Heart right ventricle (tissue), 16 donors: ENCODE measurements at regions of chr22 and their contacts with region 1.

Region 1: GRCh38 chr22:37807410-37808293 is at the start of gene GCAT:
- DNase-seq: peak; percentile 94 to 96
- ATAC-seq: peak; percentile 88 to 94 (median 91)
- H3K4me3 ChIP-seq: peak within 1 kb of the TSS; percentile 54 to 85 (median 71)
- H3K27ac ChIP-seq: peak within 1 kb of the TSS in 9 of 10 donors; percentile 30 to 96 (median 62)
- H3K4me1 ChIP-seq: peaks cover 6 to 58% (median 36%) of the 10 kb centered on the region in 9 donors
- H3K27me3 ChIP-seq: peaks cover 0 to 27% (median 0%) of the 10 kb centered on the region in 7 donors
- CTCF ChIP-seq: no peak
- total RNA-seq, gene GCAT: 26.7 to 47.8 (median 41.5) TPM

Region 2: DNA sequence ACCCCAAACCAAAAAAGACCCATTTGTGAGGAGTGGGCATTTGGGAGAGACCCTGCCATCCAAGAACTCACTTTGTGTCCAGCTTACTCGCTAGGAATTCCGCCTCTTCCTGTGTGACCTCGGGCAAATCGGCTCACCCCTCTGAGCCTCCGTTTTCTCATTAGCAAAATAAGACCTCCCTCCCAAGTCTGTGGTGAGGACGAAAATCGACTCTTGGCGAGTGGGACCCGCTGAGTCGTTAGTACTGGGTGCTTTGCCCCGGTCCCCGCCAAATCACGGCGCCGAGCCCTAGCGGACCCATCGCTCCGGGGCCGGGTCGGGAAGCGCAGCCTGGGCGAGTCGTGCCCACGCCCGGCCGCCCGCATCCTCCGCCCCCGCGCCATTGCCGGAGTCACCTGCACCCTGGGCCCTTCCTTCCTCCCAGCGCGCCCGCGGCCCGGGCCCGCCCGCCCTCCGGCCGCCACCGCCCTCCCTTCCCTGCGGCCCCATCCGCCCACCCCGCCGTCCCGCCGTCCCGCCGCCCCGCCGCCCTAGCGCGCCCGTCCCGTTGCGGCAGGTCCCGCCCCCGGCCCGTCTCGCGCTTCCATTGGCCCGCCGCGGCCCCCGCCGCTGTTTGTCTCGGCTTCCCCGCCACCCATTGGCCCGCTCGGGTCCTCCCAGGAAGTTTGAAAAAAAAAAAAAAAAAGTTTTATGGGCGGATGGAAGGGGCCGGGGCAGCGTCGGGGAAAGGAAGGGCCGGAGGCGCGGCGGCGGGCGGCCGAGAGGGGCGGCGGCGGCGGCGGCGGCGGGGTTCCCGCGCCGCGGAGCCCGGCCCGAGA is 61.9 kb before region 1 on chr22:
- intact Hi-C with region 1: loop called in 3 of 10 experiments (anchors 5 to 10 kb)
- DNase-seq: peak; percentile 93
- ATAC-seq: peak; percentile 46 to 86 (median 73)
- H3K4me3 ChIP-seq: peak overlapping the region; percentile 70 to 99 (median 96)
- H3K27ac ChIP-seq: peak overlapping the region; percentile 98 to 100 (median 99)
- H3K4me1 ChIP-seq: peaks cover 39 to 80% (median 71%) of the 10 kb centered on the region in 9 donors
- H3K27me3 ChIP-seq: no peaks in the 10 kb centered on the region
- CTCF ChIP-seq: no peak

Region 3: DNA sequence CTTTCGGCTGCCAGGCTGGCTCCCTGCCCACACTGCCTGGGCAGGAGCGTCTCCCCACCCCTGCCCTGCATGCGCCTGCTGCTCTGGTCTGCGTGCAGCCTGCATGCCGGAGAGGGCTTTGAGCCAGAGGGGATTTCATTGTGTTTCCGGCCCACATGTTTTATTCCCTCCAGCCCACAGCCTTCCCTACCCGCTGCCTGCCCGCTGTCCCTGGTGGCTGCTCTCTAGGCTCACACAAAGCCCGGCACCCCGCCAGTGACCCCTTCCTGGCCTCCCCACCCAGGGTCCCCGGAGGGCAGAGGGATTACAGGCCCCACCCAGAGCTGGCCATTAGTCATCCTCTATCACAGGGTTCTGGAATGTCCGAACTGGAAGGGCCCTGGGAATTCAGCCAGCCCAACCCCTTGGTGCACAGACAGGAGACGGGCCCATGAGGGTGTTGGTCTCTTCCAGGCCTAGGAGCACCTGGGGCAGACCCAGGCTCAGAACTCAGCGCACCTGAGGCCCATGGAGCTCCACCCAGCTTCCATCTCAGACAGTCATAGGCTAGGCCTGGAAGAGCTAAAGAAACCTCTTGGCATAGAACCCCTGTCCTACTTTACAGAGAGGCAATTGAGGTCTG is 55.1 kb before region 1 on chr22:
- intact Hi-C with region 1: loop called in 3 of 10 experiments (anchors 5 to 10 kb)
- DNase-seq: peak; percentile 92 to 94
- ATAC-seq: peak; percentile 69 to 89 (median 84)
- H3K4me3 ChIP-seq: peak overlapping the region in 3 of 10 donors; percentile 1 to 11 (median 11)
- H3K27ac ChIP-seq: peak overlapping the region; percentile 86 to 100 (median 99)
- H3K4me1 ChIP-seq: peaks cover 51 to 77% (median 70%) of the 10 kb centered on the region in 9 donors
- H3K27me3 ChIP-seq: no peaks in the 10 kb centered on the region
- CTCF ChIP-seq: peak in 6 of 9 donors; percentile 6 to 35 (median 16)

Region 4: DNA sequence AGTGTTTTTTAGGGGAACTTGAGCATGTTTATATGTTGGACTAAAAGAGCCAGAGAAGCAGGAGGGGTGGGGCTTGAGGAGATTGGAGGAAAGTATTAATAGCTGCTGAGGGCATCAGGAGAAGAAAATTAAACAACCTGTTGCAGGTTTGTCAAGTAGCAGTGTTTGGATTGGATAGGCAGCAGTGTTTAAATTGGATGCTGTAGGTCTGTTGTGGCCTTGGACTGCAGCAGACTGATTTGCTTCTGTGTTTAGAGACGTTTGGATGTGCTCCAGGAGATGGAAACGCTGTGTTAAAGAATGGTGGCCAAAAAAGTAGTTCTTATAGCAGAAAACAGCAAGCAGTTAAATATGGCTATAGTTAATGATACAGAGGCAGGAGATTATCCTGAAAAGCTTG is 47.3 kb after region 1 on chr22:
- intact Hi-C with region 1: loop called in 1 of 10 experiments (anchors 5 kb)
- DNase-seq: no peak
- ATAC-seq: no peak
- H3K4me3 ChIP-seq: no peak overlapping the region
- H3K27ac ChIP-seq: peak overlapping the region in 3 of 10 donors; percentile 6 to 33 (median 12)
- H3K4me1 ChIP-seq: peaks cover 5 to 62% (median 34%) of the 10 kb centered on the region in 9 donors
- H3K27me3 ChIP-seq: no peaks in the 10 kb centered on the region
- CTCF ChIP-seq: no peak